ENCODE measurements at regions of chr4 and their contacts with region 1.

Region 1: DNA sequence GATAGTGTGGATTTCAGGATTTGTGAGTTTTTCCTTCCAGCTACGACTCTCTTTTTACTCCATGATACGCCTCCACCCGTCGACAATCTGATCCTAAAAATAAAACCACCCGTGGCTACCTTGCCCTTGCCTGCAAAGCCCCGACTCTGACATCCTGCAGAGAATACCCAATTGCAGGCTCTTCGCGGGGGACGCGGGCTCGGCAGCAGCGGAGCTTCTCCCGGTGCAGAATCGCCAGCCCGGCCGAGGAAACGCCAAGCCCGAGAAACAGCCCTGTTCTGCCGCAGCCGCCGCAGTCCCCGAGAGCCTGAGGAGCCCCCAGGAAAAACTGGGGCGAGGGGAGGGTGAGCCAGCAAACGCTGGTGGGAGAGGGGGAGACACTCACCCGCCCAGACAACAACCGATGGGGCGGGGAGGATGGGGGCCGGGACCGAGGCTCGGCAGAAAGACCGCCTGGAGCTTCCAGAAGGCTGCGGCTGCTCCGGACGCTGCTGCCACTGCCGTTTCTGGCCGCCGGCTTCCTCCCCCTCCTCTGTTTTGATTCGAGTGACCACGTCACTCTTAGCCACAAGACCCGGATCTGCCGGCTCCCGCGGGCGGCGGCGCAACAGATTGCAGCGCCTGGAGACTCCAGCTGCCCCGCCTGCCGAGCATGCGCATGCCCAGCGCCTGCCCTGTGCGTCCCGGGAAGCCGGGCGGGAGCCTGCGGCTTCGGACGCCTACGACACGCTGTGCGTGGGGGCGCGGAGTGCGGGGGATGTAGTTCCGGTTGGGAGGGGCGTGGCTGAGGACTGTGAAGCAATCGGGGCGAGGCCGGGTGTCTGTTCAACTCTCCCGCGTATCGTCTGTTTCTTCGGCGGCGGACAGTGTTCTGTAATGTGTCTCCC is at the start of gene SMIM14:
- DNase-seq: peak; percentile 99
- ATAC-seq: peak; percentile 99
- total RNA-seq, gene SMIM14: 11.0 TPM

Region 2: DNA sequence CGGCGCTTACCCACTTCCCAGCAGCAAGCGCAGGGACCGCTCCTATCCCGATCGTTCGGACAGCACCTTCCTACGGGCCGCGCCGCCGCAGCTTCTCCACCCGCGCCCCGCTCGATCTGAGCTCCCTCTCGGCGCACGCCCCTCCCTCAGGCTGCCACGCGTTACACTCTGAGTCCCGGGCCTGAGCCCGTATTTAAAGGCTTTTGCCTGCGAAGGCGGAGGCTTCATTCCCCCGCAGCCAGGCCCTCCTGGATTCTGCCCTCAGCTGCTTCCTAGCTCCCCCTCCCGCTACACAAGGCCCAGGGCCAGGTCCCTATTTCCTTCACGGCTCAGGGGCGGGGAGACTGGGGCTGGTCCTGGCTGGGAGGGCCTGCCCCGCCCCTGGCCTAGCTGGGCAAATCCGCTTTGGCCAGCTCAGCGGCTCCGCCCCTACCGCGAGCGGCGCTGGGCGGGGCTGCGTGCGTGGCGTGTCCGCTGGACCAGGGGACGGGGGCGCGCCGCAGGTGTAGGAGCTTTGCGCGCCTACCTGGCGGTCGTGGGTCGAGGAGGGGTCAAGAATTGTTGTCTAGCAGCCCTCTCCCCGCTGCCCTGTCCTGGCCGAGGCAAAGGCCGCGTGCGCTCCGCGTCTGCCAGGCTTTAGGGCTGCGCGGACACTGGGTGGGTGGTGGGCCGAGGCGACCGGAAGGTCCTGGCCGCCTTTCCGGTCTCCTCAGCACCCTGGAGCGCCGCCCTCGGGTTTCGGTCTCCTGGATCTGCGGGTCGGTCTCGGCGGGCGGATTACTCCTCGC is 111.1 kb before region 1 on chr4 and contains the start of gene UGDH:
- intact Hi-C with region 1: loop called (anchors 1 kb)
- DNase-seq: peak; percentile 98
- ATAC-seq: peak; percentile 99
- total RNA-seq, gene UGDH: 16.6 TPM

Region 3: DNA sequence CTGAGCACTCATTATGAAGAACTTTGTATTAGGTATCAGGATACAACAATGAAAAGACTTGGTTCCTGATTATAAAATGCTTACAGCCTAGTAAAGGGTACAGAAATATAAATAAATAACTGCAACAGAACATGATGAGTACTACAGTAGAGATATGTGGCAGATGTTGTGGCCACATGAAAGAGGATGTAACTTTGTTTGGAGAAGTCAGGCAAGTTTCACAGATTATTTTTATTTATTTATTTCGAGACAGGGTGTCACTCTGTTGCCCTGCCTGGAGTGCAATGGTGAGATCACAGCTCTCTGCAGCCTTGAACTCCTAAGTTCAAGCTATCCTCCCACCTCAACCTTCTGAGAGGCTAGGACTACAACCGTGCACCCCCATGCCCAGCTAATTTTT is 43.5 kb after region 1 on chr4:
- intact Hi-C with region 1: no loop called
- DNase-seq: no peak
- ATAC-seq: peak; percentile 60

Region 4: GRCh38 chr4:40056716-40057585 is 418.4 kb after region 1 on chr4 and contains the start of gene N4BP2:
- intact Hi-C with region 1: loop called (anchors 2 kb)
- DNase-seq: peak; percentile 94
- ATAC-seq: peak; percentile 86
- total RNA-seq, gene N4BP2: 4.1 TPM

Measured in Right ventricle myocardium inferior (tissue), 1 donor.